ENCODE measurements at regions of chr7 and their contacts with region 1.

Region 1: GRCh38 chr7:129367700-129368388 is 66.4 kb upstream of the STRIP2 start:
- DNase-seq: peak; percentile 88
- ATAC-seq: peak; percentile 84
- H3K4me3 Mint-ChIP-seq: peak overlapping the region; percentile 22
- H3K27ac Mint-ChIP-seq: peak overlapping the region; percentile 52
- H3K4me1 Mint-ChIP-seq: peaks cover 23% of the 10 kb centered on the region
- H3K27me3 Mint-ChIP-seq: no peaks in the 10 kb centered on the region
- CTCF ChIP-seq: peak; percentile 87

Region 2: GRCh38 chr7:129343099-129343700 is 24.6 kb before region 1 on chr7:
- CTCF ChIA-PET with region 1: interaction called, 38 read pairs
- POLR2A ChIA-PET with region 1: no interaction called
- intact Hi-C with region 1: no loop called
- DNase-seq: peak; percentile 16
- ATAC-seq: peak; percentile 50
- H3K4me3 Mint-ChIP-seq: no peak overlapping the region
- H3K27ac Mint-ChIP-seq: no peak overlapping the region
- H3K4me1 Mint-ChIP-seq: peaks cover 31% of the 10 kb centered on the region
- H3K27me3 Mint-ChIP-seq: no peaks in the 10 kb centered on the region
- CTCF ChIP-seq: peak; percentile 83

Region 3: DNA sequence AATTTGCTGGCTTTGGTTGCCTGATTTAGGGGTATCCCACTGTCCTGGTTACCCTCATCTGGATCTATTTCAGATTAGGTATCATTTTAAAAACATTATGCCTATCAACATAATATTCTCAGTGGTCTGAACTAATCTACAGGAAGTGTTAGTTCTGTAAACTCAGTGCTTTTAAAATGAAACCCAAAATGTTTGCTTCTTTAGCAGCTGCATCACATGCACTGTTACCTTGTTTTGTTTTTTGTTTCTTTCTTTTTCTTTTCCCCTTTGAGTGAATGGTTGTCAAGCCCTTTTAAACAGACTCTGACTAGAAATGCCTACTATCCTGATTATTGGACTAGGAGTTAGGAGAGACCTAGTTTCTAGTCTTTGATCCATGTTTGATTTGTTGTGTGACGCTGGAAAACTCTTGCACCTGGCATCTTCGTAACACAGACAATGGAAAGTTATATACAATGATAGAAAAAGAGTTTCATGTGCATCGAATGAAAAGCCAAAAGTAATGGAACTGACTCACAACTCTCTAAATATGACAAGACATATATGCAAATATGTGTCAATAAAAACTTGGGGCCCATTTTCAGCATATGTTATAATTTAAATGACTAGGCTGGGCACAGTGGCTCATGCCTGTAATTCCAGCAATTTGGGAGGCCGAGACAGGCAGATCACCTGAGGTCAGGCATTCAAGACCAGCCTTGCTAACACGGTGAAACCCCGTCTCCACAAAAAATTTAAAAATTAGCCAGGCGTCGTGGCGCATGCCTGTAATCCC is 14.1 kb after region 1 on chr7:
- CTCF ChIA-PET with region 1: interaction called, 97 read pairs
- POLR2A ChIA-PET with region 1: interaction called, 5 read pairs
- intact Hi-C with region 1: no loop called
- DNase-seq: no peak
- ATAC-seq: no peak
- H3K4me3 Mint-ChIP-seq: no peak overlapping the region
- H3K27ac Mint-ChIP-seq: no peak overlapping the region
- H3K4me1 Mint-ChIP-seq: peaks cover 13% of the 10 kb centered on the region
- H3K27me3 Mint-ChIP-seq: no peaks in the 10 kb centered on the region
- CTCF ChIP-seq: no peak

Region 4: DNA sequence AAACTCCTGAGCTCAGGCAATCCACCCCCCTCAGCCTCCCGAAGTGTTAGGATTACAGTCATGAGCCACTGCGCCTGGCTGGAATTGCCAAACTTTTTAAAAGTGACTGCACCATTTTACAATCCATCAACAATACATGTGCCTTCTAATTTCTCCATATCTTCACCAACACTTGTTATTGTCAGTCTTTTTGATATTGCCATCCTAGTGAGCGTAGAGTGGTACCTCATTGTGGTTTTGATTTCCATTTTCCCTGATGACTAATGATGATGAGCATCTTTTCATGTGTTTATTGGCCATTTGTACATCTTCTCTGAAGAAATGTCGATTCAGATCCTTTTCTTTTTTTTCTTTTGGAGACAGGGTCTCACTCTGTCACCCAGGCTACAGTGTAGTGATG is 44.7 kb after region 1 on chr7:
- CTCF ChIA-PET with region 1: interaction called, 10 read pairs
- POLR2A ChIA-PET with region 1: no interaction called
- intact Hi-C with region 1: no loop called
- DNase-seq: no peak
- ATAC-seq: no peak
- H3K4me3 Mint-ChIP-seq: no peak overlapping the region
- H3K27ac Mint-ChIP-seq: no peak overlapping the region
- H3K4me1 Mint-ChIP-seq: no peaks in the 10 kb centered on the region
- H3K27me3 Mint-ChIP-seq: no peaks in the 10 kb centered on the region
- CTCF ChIP-seq: no peak

Region 5: GRCh38 chr7:129468087-129468486 is 100.2 kb after region 1 on chr7:
- CTCF ChIA-PET with region 1: interaction called, 141 read pairs
- POLR2A ChIA-PET with region 1: no interaction called
- intact Hi-C with region 1: loop called (anchors 1 kb)
- DNase-seq: no peak
- ATAC-seq: no peak
- H3K4me3 Mint-ChIP-seq: no peak overlapping the region
- H3K27ac Mint-ChIP-seq: no peak overlapping the region
- H3K4me1 Mint-ChIP-seq: peaks cover 4% of the 10 kb centered on the region
- H3K27me3 Mint-ChIP-seq: no peaks in the 10 kb centered on the region
- CTCF ChIP-seq: no peak

Region 6: DNA sequence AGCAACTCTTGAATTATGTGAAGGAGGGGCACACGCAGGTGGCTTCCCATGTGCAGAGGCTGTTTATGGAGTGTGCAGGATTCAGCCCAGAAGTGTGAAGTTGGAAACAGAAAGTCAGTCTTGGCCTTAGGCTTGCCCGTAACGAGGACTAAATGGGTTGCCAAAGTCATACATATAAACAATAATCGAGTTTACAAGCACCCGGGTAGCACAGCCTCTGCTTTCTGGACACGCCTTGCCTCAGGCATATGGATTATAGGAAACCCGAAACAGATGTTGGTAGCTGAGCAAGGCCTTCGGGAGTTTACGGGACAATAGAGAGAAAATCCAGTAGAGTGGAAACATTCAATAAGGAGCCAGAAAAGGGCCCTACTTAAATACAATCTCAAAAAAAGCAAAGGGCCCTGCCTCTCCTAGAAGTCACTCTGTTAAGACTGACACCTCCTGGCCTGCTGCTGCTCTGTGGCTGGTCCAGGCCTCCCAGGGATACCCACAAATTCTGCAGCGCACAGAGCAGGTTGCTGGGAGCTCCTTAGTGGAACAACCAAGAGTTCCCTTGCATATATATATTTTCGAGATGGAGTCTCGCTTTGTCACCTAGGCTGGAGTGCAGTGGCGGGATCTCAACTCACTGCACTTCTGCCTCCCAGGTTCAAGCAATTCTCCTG is 183.0 kb after region 1 on chr7:
- CTCF ChIA-PET with region 1: no interaction called
- POLR2A ChIA-PET with region 1: no interaction called
- intact Hi-C with region 1: no loop called
- DNase-seq: no peak
- ATAC-seq: no peak
- H3K4me3 Mint-ChIP-seq: no peak overlapping the region
- H3K27ac Mint-ChIP-seq: no peak overlapping the region
- H3K4me1 Mint-ChIP-seq: peaks cover 6% of the 10 kb centered on the region
- H3K27me3 Mint-ChIP-seq: no peaks in the 10 kb centered on the region
- CTCF ChIP-seq: no peak

Region 7: DNA sequence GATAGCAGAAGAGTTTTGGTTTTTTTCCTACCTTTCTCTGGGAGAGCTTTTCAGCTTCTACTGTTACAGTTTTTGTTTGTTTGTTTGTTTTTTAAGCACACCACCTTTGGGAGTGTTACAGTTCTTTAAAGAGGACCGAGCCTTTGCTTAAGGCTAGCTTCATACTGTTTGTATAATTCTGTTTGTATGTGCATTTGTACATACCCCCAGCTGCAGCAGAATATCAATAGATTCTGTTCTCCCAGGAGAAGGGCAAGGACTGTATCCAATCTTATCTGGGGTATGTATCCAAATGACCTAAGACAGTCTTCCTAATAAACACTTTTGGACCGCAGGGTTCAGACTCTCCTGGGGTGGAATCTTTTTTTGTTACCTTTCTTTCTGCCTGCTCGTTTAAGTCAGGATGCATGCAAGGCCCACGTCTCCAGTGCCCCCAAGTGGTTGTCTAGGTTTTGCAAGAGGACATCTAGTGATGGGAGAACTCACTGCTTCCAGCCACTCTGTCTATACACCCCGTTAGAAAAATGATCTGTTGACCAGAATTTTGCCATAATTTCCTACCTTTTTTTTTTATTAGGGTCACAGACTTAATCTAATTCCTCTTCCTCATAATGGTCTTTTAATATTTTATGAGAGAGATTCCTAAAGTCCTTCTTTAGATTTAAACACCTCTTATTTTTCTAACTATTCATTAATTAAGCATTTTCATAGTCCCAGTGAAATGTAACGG is 267.6 kb after region 1 on chr7:
- CTCF ChIA-PET with region 1: interaction called, 6 read pairs
- POLR2A ChIA-PET with region 1: no interaction called
- intact Hi-C with region 1: loop called (anchors 10 kb)
- DNase-seq: peak; percentile 87
- ATAC-seq: peak; percentile 98
- H3K4me3 Mint-ChIP-seq: no peak overlapping the region
- H3K27ac Mint-ChIP-seq: no peak overlapping the region
- H3K4me1 Mint-ChIP-seq: peaks cover 46% of the 10 kb centered on the region
- H3K27me3 Mint-ChIP-seq: no peaks in the 10 kb centered on the region
- CTCF ChIP-seq: peak; percentile 89